ENCODE measurements at regions of chr4 and their contacts with region 1.

Region 1: GRCh38 chr4:108683479-108683878 is 33.1 kb downstream of the OSTC start:
- DNase-seq: peak in 1 of 4 experiments; percentile 30
- ATAC-seq: peak; percentile 63
- H3K4me3 ChIP-seq: no peak overlapping the region
- H3K27ac ChIP-seq: no peak overlapping the region
- H3K4me1 ChIP-seq: no peaks in the 10 kb centered on the region
- H3K27me3 ChIP-seq: no peaks in the 10 kb centered on the region
- CTCF ChIP-seq: peak in 1 of 3 experiments; percentile 56; a peak in 3 of 6 replicates
- EP300 ChIP-seq: no peak
- POLR2A ChIP-seq: no peak
- RAD21 ChIP-seq: peak; percentile 54 to 60

Region 2: DNA sequence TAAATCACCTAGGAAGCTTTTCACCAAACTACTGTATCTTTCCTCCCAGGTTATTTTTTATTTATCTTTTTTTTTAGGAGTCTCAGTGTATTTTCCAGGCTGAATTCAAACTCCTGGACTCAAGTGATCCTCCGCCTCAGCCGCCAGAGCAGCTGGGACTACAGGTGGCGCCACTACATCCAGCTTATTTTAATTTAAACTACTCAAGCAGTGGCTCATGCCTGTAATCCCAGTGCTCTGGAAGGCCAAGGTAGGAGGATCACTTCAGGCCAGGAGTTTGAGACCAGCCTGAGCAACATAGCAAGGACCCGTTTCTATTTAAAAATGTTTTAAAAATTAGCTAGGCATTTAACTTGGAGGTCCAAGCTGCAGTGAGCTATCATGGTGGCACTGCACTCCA is 552.5 kb before region 1 on chr4:
- CTCF ChIA-PET with region 1: no interaction called
- POLR2A ChIA-PET with region 1: no interaction called
- in situ Hi-C with region 1: no loop called
- intact Hi-C with region 1: no loop called
- DNase-seq: peak in 1 of 4 experiments; percentile 43
- ATAC-seq: peak; percentile 62; the same call in 2 of the 3 replicates
- H3K4me3 ChIP-seq: no peak overlapping the region
- H3K27ac ChIP-seq: no peak overlapping the region
- H3K4me1 ChIP-seq: peaks cover 4 to 5% of the 10 kb centered on the region in 2 experiments; a peak in 3 of 5 replicates
- H3K27me3 ChIP-seq: no peaks in the 10 kb centered on the region
- CTCF ChIP-seq: peak in 2 of 3 experiments; percentile 28 to 35; a peak in 3 of 6 replicates
- EP300 ChIP-seq: no peak
- POLR2A ChIP-seq: no peak
- RAD21 ChIP-seq: peak in 1 of 2 experiments; percentile 24; a peak in 2 of 4 replicates

Region 3: DNA sequence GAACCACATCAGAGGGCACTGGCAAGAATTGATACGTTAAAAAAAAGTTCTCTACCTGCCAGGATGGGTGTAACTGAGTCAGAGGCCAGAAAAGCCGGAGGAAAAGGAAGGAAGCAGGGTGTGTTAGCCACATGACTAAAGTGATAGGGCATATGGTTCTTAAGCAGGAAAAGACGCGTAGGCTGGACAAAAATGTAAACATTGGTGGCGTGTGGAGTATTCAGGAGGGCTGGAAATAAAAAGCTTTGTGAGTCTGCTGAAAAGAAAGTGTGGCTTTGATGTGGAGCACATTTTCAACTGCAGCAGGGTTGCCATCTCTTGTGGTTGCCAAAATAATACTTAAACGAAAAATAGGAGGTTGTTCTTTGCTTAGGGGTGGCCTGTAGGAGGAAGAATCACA is 249.6 kb before region 1 on chr4:
- CTCF ChIA-PET with region 1: no interaction called
- POLR2A ChIA-PET with region 1: no interaction called
- in situ Hi-C with region 1: no loop called
- intact Hi-C with region 1: no loop called
- DNase-seq: peak in 1 of 4 experiments; percentile 18
- ATAC-seq: no peak
- H3K4me3 ChIP-seq: no peak overlapping the region
- H3K27ac ChIP-seq: no peak overlapping the region
- H3K4me1 ChIP-seq: no peaks in the 10 kb centered on the region; a peak in 1 of 5 replicates
- H3K27me3 ChIP-seq: no peaks in the 10 kb centered on the region
- CTCF ChIP-seq: no peak
- EP300 ChIP-seq: no peak
- POLR2A ChIP-seq: no peak
- RAD21 ChIP-seq: no peak

Region 4: DNA sequence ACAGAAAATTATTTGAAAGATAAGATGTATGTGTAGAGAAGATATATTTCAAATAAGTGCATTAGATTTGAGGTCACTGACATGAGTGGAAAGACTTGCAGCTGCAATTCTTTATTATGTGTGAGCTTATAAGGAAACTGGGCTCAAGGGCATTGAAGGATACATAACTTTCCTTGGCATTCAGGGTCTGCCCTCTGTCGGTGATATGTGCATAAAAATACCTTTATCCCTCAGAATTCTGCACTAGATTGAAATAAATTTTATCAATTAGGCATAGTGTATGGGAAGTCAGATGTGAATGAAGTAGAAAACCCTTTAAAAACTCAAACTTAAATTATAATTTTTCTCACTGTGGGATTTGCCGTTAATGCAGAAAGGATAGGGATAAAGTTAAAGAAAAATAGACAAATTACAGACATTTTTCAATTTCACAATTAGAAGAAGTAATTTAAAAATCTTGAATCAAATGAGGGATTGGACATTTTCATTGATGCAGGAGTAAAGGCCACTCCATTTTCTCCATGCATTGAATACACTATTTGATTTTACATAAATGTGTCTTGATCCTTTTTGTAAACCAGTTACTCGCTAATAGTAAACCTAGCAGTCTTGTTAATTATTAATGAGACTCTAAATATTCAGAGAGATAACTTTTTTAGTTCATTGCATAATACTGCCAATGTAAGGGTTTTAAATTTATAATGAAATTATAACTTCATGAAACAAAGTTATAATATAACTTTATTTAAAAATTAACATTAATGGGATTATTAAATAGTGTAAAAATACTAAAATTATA is 100.4 kb after region 1 on chr4:
- CTCF ChIA-PET with region 1: no interaction called
- POLR2A ChIA-PET with region 1: no interaction called
- in situ Hi-C with region 1: no loop called
- intact Hi-C with region 1: loop called (anchors 10 kb)
- DNase-seq: peak in 1 of 4 experiments; percentile 9
- ATAC-seq: no peak
- H3K4me3 ChIP-seq: no peak overlapping the region
- H3K27ac ChIP-seq: no peak overlapping the region
- H3K4me1 ChIP-seq: no peaks in the 10 kb centered on the region; a peak in 1 of 5 replicates
- H3K27me3 ChIP-seq: peaks cover 12 to 46% of the 10 kb centered on the region in 2 experiments
- CTCF ChIP-seq: peak in 1 of 3 experiments; percentile 33; a peak in 2 of 6 replicates
- EP300 ChIP-seq: no peak
- POLR2A ChIP-seq: no peak
- RAD21 ChIP-seq: peak in 1 of 2 experiments; percentile 20; a peak in 1 of 4 replicates

Region 5: GRCh38 chr4:109146499-109146898 is 463.0 kb after region 1 on chr4:
- CTCF ChIA-PET with region 1: no interaction called
- POLR2A ChIA-PET with region 1: no interaction called
- in situ Hi-C with region 1: no loop called
- intact Hi-C with region 1: no loop called
- DNase-seq: no peak
- ATAC-seq: no peak
- H3K4me3 ChIP-seq: no peak overlapping the region
- H3K27ac ChIP-seq: no peak overlapping the region
- H3K4me1 ChIP-seq: peaks cover 6 to 21% of the 10 kb centered on the region in 2 experiments; a peak in 3 of 5 replicates
- H3K27me3 ChIP-seq: no peaks in the 10 kb centered on the region; a peak in 1 of 5 replicates
- CTCF ChIP-seq: no peak
- EP300 ChIP-seq: no peak
- POLR2A ChIP-seq: no peak
- RAD21 ChIP-seq: no peak